ENCODE measurements at regions of chr22 and their contacts with region 1.

Region 1: DNA sequence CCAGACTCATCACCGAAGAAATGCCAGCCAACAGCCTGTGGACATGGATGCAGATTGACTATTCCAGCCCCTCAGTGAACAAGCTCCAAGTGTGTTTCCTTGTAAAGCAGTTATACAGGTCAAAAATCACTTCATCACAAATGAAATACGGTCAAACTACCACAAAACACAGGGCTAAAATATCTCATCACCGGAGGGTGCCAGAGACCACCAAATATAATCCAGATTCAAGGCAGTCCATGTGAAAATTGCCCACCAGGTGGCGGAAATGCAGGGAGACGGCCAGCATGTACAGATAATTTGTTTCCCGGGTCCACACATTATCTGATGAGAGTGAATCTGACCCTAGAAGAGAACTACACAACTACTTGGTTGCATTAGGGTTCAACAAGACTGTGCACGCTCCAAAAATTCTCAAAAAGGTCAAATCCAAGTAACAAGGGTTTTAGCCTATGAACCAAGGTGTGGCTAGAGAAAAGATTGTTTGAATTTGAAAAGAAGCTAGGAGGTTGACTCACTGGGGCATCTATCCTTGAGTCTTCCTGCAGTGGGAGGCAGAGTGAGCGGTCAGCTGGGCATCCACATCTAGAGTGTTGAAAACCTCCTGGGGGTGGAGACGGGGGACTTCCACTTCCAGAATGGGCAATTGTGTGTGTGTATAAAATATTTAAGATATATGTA is 71.7 kb downstream of the IGLL5 start:
- DNase-seq: peak in 5 of 6 donors; percentile 39 to 83 (median 55)
- ATAC-seq: peak; percentile 69 to 92 (median 86)
- H3K4me3 ChIP-seq: no peak overlapping the region
- H3K27ac ChIP-seq: no peak overlapping the region
- H3K4me1 ChIP-seq: no peaks in the 10 kb centered on the region
- H3K27me3 ChIP-seq: no peaks in the 10 kb centered on the region
- CTCF ChIP-seq: peak; percentile 33 to 82 (median 70)

Region 2: GRCh38 chr22:22463855-22464540 is 495.3 kb before region 1 on chr22:
- intact Hi-C with region 1: loop called in 1 of 3 experiments (anchors 10 kb)
- DNase-seq: peak in 3 of 6 donors; percentile 6 to 52 (median 18)
- ATAC-seq: peak; percentile 53 to 81 (median 67)
- H3K4me3 ChIP-seq: no peak overlapping the region
- H3K27ac ChIP-seq: no peak overlapping the region
- H3K4me1 ChIP-seq: no peaks in the 10 kb centered on the region
- H3K27me3 ChIP-seq: peaks cover 0 to 8% (median 4%) of the 10 kb centered on the region in 4 donors
- CTCF ChIP-seq: peak; percentile 54 to 74 (median 70)

Region 3: DNA sequence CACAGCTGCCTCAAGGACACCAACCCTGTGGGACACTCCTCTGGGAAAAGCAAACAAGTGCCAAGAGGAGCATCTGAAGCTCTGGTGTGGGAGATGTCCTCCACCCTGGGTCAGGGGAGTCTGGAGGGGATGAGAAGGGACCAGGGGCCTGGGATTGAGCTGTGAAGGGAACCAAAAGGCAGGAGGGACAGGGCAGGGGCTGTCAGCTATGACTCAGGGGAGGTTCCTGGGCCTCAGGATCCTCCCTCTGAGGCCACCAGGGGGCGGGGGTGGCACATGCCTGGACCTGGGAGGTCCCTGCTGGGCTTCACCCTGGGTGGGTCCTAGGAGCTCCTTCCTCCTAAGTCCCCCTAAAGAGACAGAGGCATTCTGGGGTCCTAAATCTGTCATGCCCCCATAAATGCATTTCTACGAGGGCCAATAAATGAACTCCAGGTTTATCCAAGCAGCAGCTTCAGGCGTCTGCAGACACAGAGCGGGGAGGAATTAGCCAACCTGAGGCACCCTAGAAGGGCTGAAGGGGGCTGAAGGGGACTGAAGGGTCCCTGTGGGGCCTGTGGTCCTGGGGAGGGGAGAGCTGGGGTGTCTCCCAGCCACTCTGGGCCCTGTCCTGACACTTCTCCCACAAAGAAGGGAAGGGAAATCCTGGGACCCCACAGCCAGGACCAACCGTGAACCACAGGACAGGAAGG is 103.5 kb before region 1 on chr22:
- intact Hi-C with region 1: loop called in 1 of 3 experiments (anchors 10 kb)
- DNase-seq: no peak
- ATAC-seq: peak in 2 of 4 donors; percentile 41 to 48
- H3K4me3 ChIP-seq: no peak overlapping the region
- H3K27ac ChIP-seq: no peak overlapping the region
- H3K4me1 ChIP-seq: no peaks in the 10 kb centered on the region
- H3K27me3 ChIP-seq: no peaks in the 10 kb centered on the region
- CTCF ChIP-seq: peak in 2 of 4 donors; percentile 5 to 15

Region 4: GRCh38 chr22:23069502-23070357 is 110.4 kb after region 1 on chr22:
- intact Hi-C with region 1: no loop called
- DNase-seq: peak; percentile 92 to 98 (median 94)
- ATAC-seq: peak; percentile 98 to 99 (median 99)
- H3K4me3 ChIP-seq: peak overlapping the region; percentile 35 to 57 (median 49)
- H3K27ac ChIP-seq: peak overlapping the region in 3 of 4 donors; percentile 25 to 57 (median 52)
- H3K4me1 ChIP-seq: peaks cover 0 to 4% (median 3%) of the 10 kb centered on the region in 3 donors
- H3K27me3 ChIP-seq: no peaks in the 10 kb centered on the region
- CTCF ChIP-seq: no peak

Region 5: GRCh38 chr22:23128269-23129108 is 169.2 kb after region 1 on chr22:
- intact Hi-C with region 1: loop called (anchors 5 to 10 kb)
- DNase-seq: peak; percentile 42 to 82 (median 72)
- ATAC-seq: peak; percentile 75 to 95 (median 93)
- H3K4me3 ChIP-seq: no peak overlapping the region
- H3K27ac ChIP-seq: no peak overlapping the region
- H3K4me1 ChIP-seq: peaks cover 0 to 5% (median 0%) of the 10 kb centered on the region in 3 donors
- H3K27me3 ChIP-seq: no peaks in the 10 kb centered on the region
- CTCF ChIP-seq: peak; percentile 55 to 66 (median 58)

Region 6: GRCh38 chr22:23385291-23386244 is 426.3 kb after region 1 on chr22:
- intact Hi-C with region 1: loop called in 1 of 3 experiments (anchors 5 kb)
- DNase-seq: peak; percentile 65 to 98 (median 88)
- ATAC-seq: peak; percentile 90 to 97 (median 94)
- H3K4me3 ChIP-seq: no peak overlapping the region
- H3K27ac ChIP-seq: no peak overlapping the region
- H3K4me1 ChIP-seq: no peaks in the 10 kb centered on the region
- H3K27me3 ChIP-seq: no peaks in the 10 kb centered on the region
- CTCF ChIP-seq: peak; percentile 94 to 100 (median 99)